Activated CD4-positive, alpha-beta memory T cell treated with anti-CD3 and anti-CD28 coated beads for 36 hours (primary cell): ENCODE measurements at regions of chr12 and their contacts with region 1.

Region 1: DNA sequence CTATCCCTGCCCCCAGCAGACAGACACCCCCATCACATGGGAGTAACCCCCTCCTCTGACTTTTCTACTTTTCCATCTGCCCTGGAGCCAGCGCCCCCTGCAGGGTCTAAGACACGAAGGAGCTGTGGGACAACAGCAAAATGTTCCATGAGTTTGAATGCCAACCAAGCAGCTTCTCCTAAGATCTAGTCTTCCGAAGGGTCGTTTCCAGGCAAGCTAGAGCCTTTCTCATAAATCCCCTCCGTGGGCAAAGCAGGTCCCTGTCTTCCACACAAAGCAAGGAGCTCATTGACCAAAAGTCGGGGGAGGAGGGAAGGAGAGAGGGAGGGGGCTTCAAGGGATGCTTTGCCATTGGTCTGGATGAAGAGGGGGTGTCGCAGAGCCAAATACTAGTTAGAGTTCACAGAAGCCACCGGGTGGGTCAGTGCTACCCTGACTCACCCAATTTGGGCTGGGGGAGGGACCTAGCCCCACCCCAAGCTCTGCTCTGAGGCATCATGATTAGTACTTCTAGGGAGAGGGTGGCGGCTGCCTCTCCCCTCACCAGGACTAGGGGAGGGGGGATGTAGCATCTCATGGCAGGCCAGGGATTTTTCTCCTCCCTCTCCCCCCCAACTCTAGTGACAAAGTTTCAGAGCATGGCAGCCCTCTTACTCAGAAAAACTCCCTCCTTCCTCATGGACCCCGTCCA is 1.6 kb downstream of the MSI1 start:
- DNase-seq: peak; percentile 30
- H3K4me3 Mint-ChIP-seq: peak overlapping the region; percentile 61
- H3K27ac Mint-ChIP-seq: no peak overlapping the region
- H3K4me1 Mint-ChIP-seq: peaks cover 16% of the 10 kb centered on the region
- H3K27me3 Mint-ChIP-seq: peaks cover 72% of the 10 kb centered on the region

Region 2: GRCh38 chr12:120356567-120357030 is 10.8 kb before region 1 on chr12:
- CTCF ChIA-PET with region 1: interaction called, 24 read pairs
- POLR2A ChIA-PET with region 1: interaction called, 3 read pairs
- intact Hi-C with region 1: no loop called
- DNase-seq: peak; percentile 84
- H3K4me3 Mint-ChIP-seq: no peak overlapping the region
- H3K27ac Mint-ChIP-seq: no peak overlapping the region
- H3K4me1 Mint-ChIP-seq: no peaks in the 10 kb centered on the region
- H3K27me3 Mint-ChIP-seq: peaks cover 23% of the 10 kb centered on the region

Region 3: GRCh38 chr12:120428597-120429229 is 61.3 kb after region 1 on chr12:
- CTCF ChIA-PET with region 1: interaction called, 16 read pairs
- POLR2A ChIA-PET with region 1: interaction called, 4 read pairs
- intact Hi-C with region 1: no loop called
- DNase-seq: no peak
- H3K4me3 Mint-ChIP-seq: no peak overlapping the region
- H3K27ac Mint-ChIP-seq: no peak overlapping the region
- H3K4me1 Mint-ChIP-seq: peaks cover 6% of the 10 kb centered on the region
- H3K27me3 Mint-ChIP-seq: peaks cover 4% of the 10 kb centered on the region